ENCODE measurements at regions of chr16 and their contacts with region 1.

Region 1: DNA sequence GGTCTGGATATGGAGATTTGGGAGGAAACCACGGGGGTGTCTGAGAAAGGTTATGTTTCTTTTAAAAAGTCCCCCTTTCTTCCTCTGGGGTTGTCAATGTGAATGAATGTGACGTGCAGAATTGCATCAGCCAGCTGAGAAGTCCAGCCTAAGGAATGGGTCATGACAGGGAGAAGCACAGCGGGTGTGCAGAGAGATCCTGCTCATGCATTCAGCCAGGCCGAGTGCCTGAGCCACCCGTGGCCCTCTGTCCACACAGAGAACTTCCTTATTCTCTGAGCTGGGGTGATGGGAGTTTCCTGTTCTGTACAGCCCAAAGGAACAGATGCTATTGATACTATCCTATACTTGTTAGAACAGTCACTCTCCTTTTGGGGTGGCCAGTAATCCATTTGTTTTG is 117.9 kb downstream of the CPPED1 start:
- DNase-seq: no peak

Region 2: GRCh38 chr16:12220766-12221165 is 465.0 kb before region 1 on chr16:
- intact Hi-C with region 1: loop called in 1 of 2 experiments (anchors 5 kb)
- DNase-seq: no peak

Region 3: DNA sequence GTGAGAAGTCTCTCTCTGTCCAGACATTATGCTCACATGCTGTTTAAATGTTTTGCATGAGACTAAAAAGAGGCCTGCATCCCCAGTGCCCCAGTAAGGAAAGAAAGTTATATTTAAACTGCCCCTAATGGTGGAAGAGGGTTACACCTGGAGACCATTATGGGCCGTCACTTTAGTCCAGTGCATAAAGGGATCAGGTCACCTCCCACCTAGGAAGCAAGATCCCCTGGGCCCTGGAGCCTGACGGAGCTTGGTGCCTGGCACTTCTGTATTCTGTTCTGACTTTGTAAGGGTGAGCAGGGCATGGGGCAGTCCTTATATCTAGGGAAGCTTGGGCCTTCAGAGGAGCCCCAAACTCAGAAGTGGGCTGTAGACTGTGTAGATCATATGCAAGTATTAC is 50.0 kb after region 1 on chr16:
- intact Hi-C with region 1: no loop called
- DNase-seq: no peak

Region 4: GRCh38 chr16:12846592-12846991 is 160.8 kb after region 1 on chr16:
- intact Hi-C with region 1: no loop called
- DNase-seq: no peak

Measured in posterior vena cava (tissue), 2 donors.